A549 (cell line): ENCODE measurements at regions of chr9 and their contacts with region 1.

Region 1: DNA sequence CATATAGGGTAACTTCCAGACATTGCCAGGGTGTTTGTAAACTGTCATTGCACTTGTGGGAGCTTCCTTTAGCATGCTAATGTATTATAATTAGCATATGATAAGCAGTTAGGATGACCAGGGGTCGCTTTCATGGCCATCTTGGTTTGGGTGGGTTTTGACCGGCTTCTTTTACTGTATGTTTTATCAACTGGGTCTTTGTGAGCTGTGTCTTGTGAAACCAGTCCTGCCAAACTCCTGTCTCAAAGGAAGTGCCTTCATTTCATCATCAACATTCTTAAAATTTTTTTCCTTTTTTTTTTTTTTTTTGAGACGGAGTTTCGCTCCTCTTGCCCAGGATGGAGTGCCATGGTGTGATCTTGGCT is 11.9 kb upstream of the MELK start:
- DNase-seq: no peak
- ATAC-seq: no peak; a peak in 1 of 6 replicates
- H3K4me3 ChIP-seq: no peak overlapping the region
- H3K27ac ChIP-seq: no peak overlapping the region
- H3K4me1 ChIP-seq: peaks cover 4% of the 10 kb centered on the region; the same call in 1 of the 3 replicates
- CTCF ChIP-seq: no peak
- EP300 ChIP-seq: no peak
- POLR2A ChIP-seq: no peak
- RAD21 ChIP-seq: no peak

Region 2: GRCh38 chr9:36423206-36423605 is 137.6 kb before region 1 on chr9:
- CTCF ChIA-PET with region 1: no interaction called
- POLR2A ChIA-PET with region 1: no interaction called
- DNase-seq: no peak
- ATAC-seq: no peak
- H3K4me3 ChIP-seq: no peak overlapping the region
- H3K27ac ChIP-seq: no peak overlapping the region
- H3K4me1 ChIP-seq: peaks cover 37% of the 10 kb centered on the region
- CTCF ChIP-seq: no peak
- EP300 ChIP-seq: no peak
- POLR2A ChIP-seq: no peak
- RAD21 ChIP-seq: no peak

Region 3: GRCh38 chr9:36436909-36437308 is 123.9 kb before region 1 on chr9:
- CTCF ChIA-PET with region 1: interaction called, 12 read pairs
- POLR2A ChIA-PET with region 1: no interaction called
- DNase-seq: no peak
- ATAC-seq: no peak
- H3K4me3 ChIP-seq: no peak overlapping the region
- H3K27ac ChIP-seq: no peak overlapping the region
- H3K4me1 ChIP-seq: no peaks in the 10 kb centered on the region
- CTCF ChIP-seq: no peak
- EP300 ChIP-seq: no peak
- POLR2A ChIP-seq: no peak
- RAD21 ChIP-seq: no peak

Region 4: GRCh38 chr9:36441966-36442365 is 118.9 kb before region 1 on chr9:
- CTCF ChIA-PET with region 1: interaction called, 12 read pairs
- POLR2A ChIA-PET with region 1: no interaction called
- DNase-seq: no peak
- ATAC-seq: no peak
- H3K4me3 ChIP-seq: no peak overlapping the region
- H3K27ac ChIP-seq: no peak overlapping the region
- H3K4me1 ChIP-seq: no peaks in the 10 kb centered on the region
- CTCF ChIP-seq: no peak
- EP300 ChIP-seq: no peak
- POLR2A ChIP-seq: no peak
- RAD21 ChIP-seq: no peak

Region 5: DNA sequence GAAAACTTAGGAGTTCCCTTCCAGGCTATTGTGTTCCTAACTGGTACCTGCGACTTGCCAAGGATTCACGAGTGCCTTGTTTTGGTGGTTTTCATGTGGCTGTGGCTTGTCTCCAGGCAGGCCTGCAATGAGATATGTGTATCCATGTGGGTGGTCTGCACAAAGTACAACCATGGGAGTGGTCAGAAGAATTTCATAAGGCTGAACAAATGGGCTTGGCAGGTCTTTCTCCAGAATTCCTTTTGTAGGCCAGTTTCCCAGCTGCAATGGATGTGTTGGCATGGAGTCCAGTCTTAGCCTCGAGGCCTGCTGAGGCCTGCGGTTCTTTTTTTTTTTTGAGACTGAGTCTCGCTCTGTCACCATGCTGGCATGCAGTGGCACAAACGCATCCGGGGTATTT is 16.9 kb before region 1 on chr9:
- CTCF ChIA-PET with region 1: interaction called, 17 read pairs
- POLR2A ChIA-PET with region 1: no interaction called
- DNase-seq: no peak
- ATAC-seq: no peak
- H3K4me3 ChIP-seq: no peak overlapping the region
- H3K27ac ChIP-seq: no peak overlapping the region
- H3K4me1 ChIP-seq: no peaks in the 10 kb centered on the region
- CTCF ChIP-seq: no peak
- EP300 ChIP-seq: no peak
- POLR2A ChIP-seq: no peak
- RAD21 ChIP-seq: no peak

Region 6: DNA sequence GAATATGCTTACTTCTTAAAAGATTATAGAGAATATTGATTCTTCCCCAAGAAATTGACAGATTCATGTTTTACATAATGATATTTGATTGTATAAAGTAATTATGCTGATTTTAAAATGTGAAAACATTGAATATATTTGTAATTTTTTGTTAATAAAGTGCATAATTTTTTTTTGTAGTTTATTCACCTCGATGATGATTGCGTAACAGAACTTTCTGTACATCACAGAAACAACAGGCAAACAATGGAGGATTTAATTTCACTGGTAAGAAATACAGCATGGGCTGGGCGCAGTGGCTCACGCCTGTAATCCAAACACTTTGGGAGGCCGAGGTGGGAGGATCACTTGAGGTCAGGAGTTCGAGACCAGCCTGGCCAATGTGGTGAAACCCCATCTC is 82.0 kb after region 1 on chr9:
- CTCF ChIA-PET with region 1: no interaction called
- POLR2A ChIA-PET with region 1: no interaction called
- DNase-seq: no peak
- ATAC-seq: no peak
- H3K4me3 ChIP-seq: no peak overlapping the region
- H3K27ac ChIP-seq: no peak overlapping the region
- H3K4me1 ChIP-seq: no peaks in the 10 kb centered on the region
- CTCF ChIP-seq: no peak
- EP300 ChIP-seq: no peak
- POLR2A ChIP-seq: no peak
- RAD21 ChIP-seq: no peak